IMR-90 (cell line): ENCODE measurements at regions of chr16 and their contacts with region 1.

Region 1: DNA sequence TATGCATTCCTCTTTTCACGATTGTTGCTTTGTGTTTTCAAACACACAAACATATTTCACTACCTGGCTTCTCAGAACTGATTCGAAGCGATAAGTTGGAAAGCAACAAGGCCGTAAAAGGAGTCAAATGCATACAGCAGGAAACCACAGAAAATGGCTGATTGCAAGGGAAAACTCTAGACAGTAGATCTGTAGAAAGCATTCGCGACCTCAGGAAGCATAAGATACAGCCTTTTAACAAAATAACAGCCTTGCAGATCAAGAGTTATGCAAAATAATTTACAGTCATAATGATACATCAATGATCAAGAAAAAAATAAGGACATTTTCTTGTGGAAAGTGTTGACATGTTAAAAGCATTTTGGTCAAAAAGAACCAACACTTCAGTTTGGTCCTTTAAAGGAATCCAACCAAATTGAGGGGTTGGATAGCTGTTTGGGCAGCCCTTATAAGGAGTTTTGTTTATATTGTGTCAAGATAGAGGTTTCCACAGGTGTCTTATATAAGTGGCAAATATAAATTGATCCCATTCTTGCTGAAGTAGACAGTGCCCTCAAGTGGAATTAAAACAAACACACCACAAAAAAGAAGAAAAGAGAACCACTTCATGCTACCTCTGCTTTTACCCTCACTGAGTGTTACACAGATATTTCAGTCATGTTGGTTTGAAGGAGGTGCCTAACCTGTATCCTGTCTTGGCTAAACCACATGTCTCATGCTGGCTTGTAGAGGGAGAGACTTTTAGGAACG is 5.5 kb downstream of the CYLD start:
- DNase-seq: no peak
- ATAC-seq: no peak
- H3K4me3 ChIP-seq: no peak overlapping the region
- H3K27ac ChIP-seq: no peak overlapping the region
- H3K4me1 ChIP-seq: peaks cover 7% of the 10 kb centered on the region
- H3K27me3 ChIP-seq: no peaks in the 10 kb centered on the region
- CTCF ChIP-seq: peak; percentile 18; the same call in 1 of the 2 replicates
- POLR2A ChIP-seq: no peak
- RAD21 ChIP-seq: no peak; the same call in 1 of the 2 replicates

Region 2: DNA sequence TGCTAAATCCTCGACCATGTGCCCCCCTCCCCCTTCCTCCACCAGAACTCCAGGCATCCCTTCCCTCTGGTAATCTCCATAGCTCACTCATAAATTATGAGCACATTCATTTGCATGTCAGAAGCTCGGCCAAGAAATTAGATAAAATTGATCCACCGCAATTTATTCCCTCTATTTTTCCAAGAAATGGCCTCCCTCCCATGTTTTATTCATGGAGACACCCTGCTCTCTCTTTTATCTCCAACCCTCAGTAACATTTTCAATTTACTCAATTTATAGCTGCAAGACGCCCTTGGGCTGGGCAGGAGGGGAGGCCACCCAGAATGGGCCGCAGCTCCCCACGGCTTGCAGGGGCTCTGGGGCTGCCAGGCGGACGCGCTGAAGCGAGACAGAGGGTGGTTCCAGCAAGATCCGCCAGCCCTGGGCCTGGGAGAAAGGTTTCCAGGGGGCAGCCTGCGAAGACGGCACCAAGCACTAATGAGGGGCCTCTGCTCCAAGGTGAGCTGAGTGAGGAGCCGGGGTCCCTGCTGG is 836.8 kb before region 1 on chr16:
- CTCF ChIA-PET with region 1: no interaction called
- POLR2A ChIA-PET with region 1: no interaction called
- dilution Hi-C with region 1: no loop called
- in situ Hi-C with region 1: no loop called
- intact Hi-C with region 1: no loop called
- DNase-seq: no peak
- ATAC-seq: no peak
- H3K4me3 ChIP-seq: no peak overlapping the region
- H3K27ac ChIP-seq: no peak overlapping the region
- H3K4me1 ChIP-seq: no peaks in the 10 kb centered on the region
- H3K27me3 ChIP-seq: no peaks in the 10 kb centered on the region; the same call in 1 of the 2 replicates
- CTCF ChIP-seq: no peak
- POLR2A ChIP-seq: no peak
- RAD21 ChIP-seq: no peak

Region 3: GRCh38 chr16:50789757-50790156 is 42.4 kb after region 1 on chr16:
- CTCF ChIA-PET with region 1: no interaction called
- POLR2A ChIA-PET with region 1: no interaction called
- dilution Hi-C with region 1: no loop called
- in situ Hi-C with region 1: no loop called
- intact Hi-C with region 1: loop called (anchors 5 kb)
- DNase-seq: no peak
- ATAC-seq: no peak
- H3K4me3 ChIP-seq: no peak overlapping the region
- H3K27ac ChIP-seq: no peak overlapping the region
- H3K4me1 ChIP-seq: no peaks in the 10 kb centered on the region
- H3K27me3 ChIP-seq: no peaks in the 10 kb centered on the region
- CTCF ChIP-seq: no peak
- POLR2A ChIP-seq: no peak
- RAD21 ChIP-seq: no peak

Region 4: GRCh38 chr16:50967827-50968612 is 220.6 kb after region 1 on chr16:
- CTCF ChIA-PET with region 1: no interaction called
- POLR2A ChIA-PET with region 1: no interaction called
- dilution Hi-C with region 1: no loop called
- in situ Hi-C with region 1: no loop called
- intact Hi-C with region 1: no loop called
- DNase-seq: no peak
- ATAC-seq: no peak
- H3K4me3 ChIP-seq: no peak overlapping the region
- H3K27ac ChIP-seq: no peak overlapping the region
- H3K4me1 ChIP-seq: no peaks in the 10 kb centered on the region
- H3K27me3 ChIP-seq: no peaks in the 10 kb centered on the region
- CTCF ChIP-seq: no peak
- POLR2A ChIP-seq: no peak
- RAD21 ChIP-seq: no peak